CD4-positive, alpha-beta memory T cell (primary cell): ENCODE measurements at regions of chr18 and their contacts with region 1.

Region 1: GRCh38 chr18:23071285-23071684 is 64.0 kb upstream of the CABLES1 start:
- DNase-seq: peak; percentile 87 to 93 (median 90)
- H3K4me3 ChIP-seq: peak overlapping the region in 1 of 2 donors; percentile 13
- H3K4me3 Mint-ChIP-seq: peak overlapping the region; percentile 37 to 95 (median 76)
- H3K27ac ChIP-seq: no peak overlapping the region
- H3K27ac Mint-ChIP-seq: peak overlapping the region; percentile 74 to 96 (median 92)
- H3K4me1 ChIP-seq: peaks cover 64% of the 10 kb centered on the region
- H3K4me1 Mint-ChIP-seq: peaks cover 51 to 79% (median 59%) of the 10 kb centered on the region in 4 donors
- H3K27me3 ChIP-seq: no peaks in the 10 kb centered on the region
- H3K27me3 Mint-ChIP-seq: no peaks in the 10 kb centered on the region

Region 2: DNA sequence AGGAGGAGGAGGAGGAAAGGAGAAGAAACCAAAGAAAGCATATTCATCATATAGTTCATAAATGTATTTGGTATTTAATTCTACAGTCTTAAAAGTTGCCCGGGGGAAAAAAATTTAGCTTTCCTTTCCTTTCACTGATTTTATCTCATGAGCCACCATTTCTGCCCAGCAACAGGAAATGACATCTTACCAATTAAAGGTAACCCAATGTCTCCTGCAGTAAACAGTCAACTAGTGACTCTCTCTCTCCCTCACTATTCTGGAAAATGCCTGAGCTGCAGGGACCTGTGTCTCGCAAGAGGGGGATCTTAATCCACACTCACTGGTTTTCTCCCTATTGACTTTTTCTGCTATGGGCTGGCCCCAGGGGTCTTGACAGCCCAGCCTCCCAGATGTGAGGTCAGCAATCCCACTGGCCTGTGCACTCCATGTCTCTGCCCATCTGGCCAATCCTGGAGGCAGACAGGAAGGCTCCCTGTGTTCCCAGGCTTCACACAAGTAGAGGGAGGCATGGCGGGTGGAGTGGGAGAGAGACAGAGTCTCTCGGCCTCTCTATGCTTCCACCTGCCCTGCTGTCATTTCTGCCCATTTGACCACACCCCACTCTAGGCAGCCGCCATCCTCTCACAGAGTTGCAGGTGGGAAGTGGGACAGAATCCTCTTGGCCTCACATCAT is 21.4 kb before region 1 on chr18:
- CTCF ChIA-PET with region 1: interaction called, 5 read pairs
- POLR2A ChIA-PET with region 1: interaction called, 6 read pairs
- intact Hi-C with region 1: loop called (anchors 1 kb)
- DNase-seq: peak in 4 of 5 donors; percentile 30 to 50 (median 40)
- H3K4me3 ChIP-seq: peak overlapping the region; percentile 12 to 18
- H3K4me3 Mint-ChIP-seq: peak overlapping the region in 7 of 8 donors; percentile 8 to 75 (median 49)
- H3K27ac ChIP-seq: no peak overlapping the region
- H3K27ac Mint-ChIP-seq: peak overlapping the region in 6 of 7 donors; percentile 42 to 88 (median 74)
- H3K4me1 ChIP-seq: peaks cover 17% of the 10 kb centered on the region
- H3K4me1 Mint-ChIP-seq: peaks cover 10 to 26% (median 15%) of the 10 kb centered on the region in 4 donors
- H3K27me3 ChIP-seq: no peaks in the 10 kb centered on the region
- H3K27me3 Mint-ChIP-seq: peaks cover 0 to 2% of the 10 kb centered on the region in 2 donors

Region 3: DNA sequence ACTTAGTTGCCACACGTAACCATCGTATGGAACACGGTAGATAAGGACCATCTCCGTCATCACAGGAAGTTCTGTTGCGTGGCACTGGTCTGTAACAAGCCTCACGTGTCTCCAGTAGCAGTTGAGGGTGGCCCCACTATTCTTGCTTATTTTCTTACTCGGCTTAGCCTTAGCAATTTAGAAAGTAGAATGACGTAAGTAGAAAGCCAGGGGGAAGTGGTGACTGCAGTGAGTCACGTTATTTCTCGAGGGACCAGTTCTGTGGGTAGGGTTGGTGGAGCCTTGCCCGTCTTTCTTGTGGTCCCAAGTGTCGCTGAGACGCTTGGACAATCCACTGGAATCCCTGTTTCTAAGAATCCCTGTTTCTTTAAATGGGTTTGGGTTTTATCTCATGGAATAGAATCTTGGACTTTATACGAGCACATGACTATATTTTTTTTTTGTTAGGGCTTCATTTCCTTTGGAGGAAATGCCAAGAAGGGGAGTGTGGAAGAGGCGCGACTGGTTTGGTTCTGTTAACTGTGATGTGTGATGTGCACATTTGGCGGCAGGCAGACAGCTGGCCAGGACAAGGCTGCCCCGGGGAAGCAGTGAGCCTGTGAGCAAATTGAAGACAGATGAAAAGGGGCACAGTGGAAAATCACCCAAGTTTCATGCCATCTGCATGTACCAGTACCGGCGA is 160.2 kb after region 1 on chr18:
- CTCF ChIA-PET with region 1: no interaction called
- POLR2A ChIA-PET with region 1: no interaction called
- intact Hi-C with region 1: loop called (anchors 10 kb)
- DNase-seq: peak; percentile 75 to 93 (median 83)
- H3K4me3 ChIP-seq: peak overlapping the region in 1 of 2 donors; percentile 27
- H3K4me3 Mint-ChIP-seq: peak overlapping the region; percentile 10 to 83 (median 66)
- H3K27ac ChIP-seq: peak overlapping the region; percentile 34
- H3K27ac Mint-ChIP-seq: peak overlapping the region; percentile 93 to 97 (median 95)
- H3K4me1 ChIP-seq: peaks cover 15% of the 10 kb centered on the region
- H3K4me1 Mint-ChIP-seq: peaks cover 8 to 47% (median 17%) of the 10 kb centered on the region in 4 donors
- H3K27me3 ChIP-seq: no peaks in the 10 kb centered on the region
- H3K27me3 Mint-ChIP-seq: no peaks in the 10 kb centered on the region